ENCODE measurements at regions of chr21 and their contacts with region 1.

Region 1: GRCh38 chr21:32940079-32941014 is 85.4 kb upstream of the OLIG2 start:
- DNase-seq: peak; percentile 39 to 46
- H3K4me3 ChIP-seq: no peak overlapping the region
- H3K4me3 Mint-ChIP-seq: no peak overlapping the region
- H3K27ac Mint-ChIP-seq: no peak overlapping the region
- H3K4me1 ChIP-seq: no peaks in the 10 kb centered on the region
- H3K4me1 Mint-ChIP-seq: no peaks in the 10 kb centered on the region
- H3K27me3 ChIP-seq: no peaks in the 10 kb centered on the region
- H3K27me3 Mint-ChIP-seq: peaks cover 6% of the 10 kb centered on the region
- CTCF ChIP-seq: peak; percentile 63 to 66

Region 2: DNA sequence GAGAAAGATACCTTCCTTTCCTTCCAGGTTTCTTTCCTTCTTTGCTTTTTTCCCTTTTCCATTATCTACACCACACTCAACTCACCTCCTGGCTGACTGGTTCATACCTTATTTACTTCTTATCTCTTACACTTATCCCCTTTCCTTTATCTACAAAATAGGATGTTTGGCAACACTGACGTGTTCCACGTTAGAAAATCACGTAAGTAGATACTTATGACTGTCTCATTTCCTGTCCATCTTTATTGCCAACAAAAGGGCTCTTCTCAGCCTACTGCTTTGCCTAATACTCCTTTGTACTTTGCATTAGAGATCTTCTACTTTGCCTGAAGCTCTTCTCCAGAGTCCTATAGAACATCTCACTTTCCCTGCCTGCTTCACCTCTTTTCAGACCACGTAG is 237.6 kb before region 1 on chr21:
- CTCF ChIA-PET with region 1: no interaction called
- POLR2A ChIA-PET with region 1: no interaction called
- intact Hi-C with region 1: no loop called
- DNase-seq: peak in 1 of 2 experiments; percentile 5
- H3K4me3 ChIP-seq: no peak overlapping the region
- H3K4me3 Mint-ChIP-seq: no peak overlapping the region
- H3K27ac Mint-ChIP-seq: no peak overlapping the region
- H3K4me1 ChIP-seq: peaks cover 17% of the 10 kb centered on the region
- H3K4me1 Mint-ChIP-seq: peaks cover 22% of the 10 kb centered on the region
- H3K27me3 ChIP-seq: no peaks in the 10 kb centered on the region
- H3K27me3 Mint-ChIP-seq: no peaks in the 10 kb centered on the region
- CTCF ChIP-seq: no peak

Region 3: GRCh38 chr21:32929633-32930038 is 10.7 kb before region 1 on chr21:
- CTCF ChIA-PET with region 1: no interaction called
- POLR2A ChIA-PET with region 1: no interaction called
- intact Hi-C with region 1: no loop called
- DNase-seq: no peak
- H3K4me3 ChIP-seq: no peak overlapping the region
- H3K4me3 Mint-ChIP-seq: no peak overlapping the region
- H3K27ac Mint-ChIP-seq: no peak overlapping the region
- H3K4me1 ChIP-seq: no peaks in the 10 kb centered on the region
- H3K4me1 Mint-ChIP-seq: no peaks in the 10 kb centered on the region
- H3K27me3 ChIP-seq: no peaks in the 10 kb centered on the region
- H3K27me3 Mint-ChIP-seq: peaks cover 7% of the 10 kb centered on the region
- CTCF ChIP-seq: no peak

Region 4: GRCh38 chr21:33019885-33020557 is 79.7 kb after region 1 on chr21:
- CTCF ChIA-PET with region 1: interaction called, 13 read pairs
- POLR2A ChIA-PET with region 1: no interaction called
- intact Hi-C with region 1: no loop called
- DNase-seq: peak in 1 of 2 experiments; percentile 11
- H3K4me3 ChIP-seq: 0 out of 2 replicates have a peak overlapping the region, but pooled peaks have one; percentile 9
- H3K4me3 Mint-ChIP-seq: peak overlapping the region; percentile 1
- H3K27ac Mint-ChIP-seq: no peak overlapping the region
- H3K4me1 ChIP-seq: no peaks in the 10 kb centered on the region
- H3K4me1 Mint-ChIP-seq: no peaks in the 10 kb centered on the region
- H3K27me3 ChIP-seq: no peaks in the 10 kb centered on the region; the same call in 1 of the 2 replicates
- H3K27me3 Mint-ChIP-seq: peaks cover 23% of the 10 kb centered on the region
- CTCF ChIP-seq: no peak

Region 5: DNA sequence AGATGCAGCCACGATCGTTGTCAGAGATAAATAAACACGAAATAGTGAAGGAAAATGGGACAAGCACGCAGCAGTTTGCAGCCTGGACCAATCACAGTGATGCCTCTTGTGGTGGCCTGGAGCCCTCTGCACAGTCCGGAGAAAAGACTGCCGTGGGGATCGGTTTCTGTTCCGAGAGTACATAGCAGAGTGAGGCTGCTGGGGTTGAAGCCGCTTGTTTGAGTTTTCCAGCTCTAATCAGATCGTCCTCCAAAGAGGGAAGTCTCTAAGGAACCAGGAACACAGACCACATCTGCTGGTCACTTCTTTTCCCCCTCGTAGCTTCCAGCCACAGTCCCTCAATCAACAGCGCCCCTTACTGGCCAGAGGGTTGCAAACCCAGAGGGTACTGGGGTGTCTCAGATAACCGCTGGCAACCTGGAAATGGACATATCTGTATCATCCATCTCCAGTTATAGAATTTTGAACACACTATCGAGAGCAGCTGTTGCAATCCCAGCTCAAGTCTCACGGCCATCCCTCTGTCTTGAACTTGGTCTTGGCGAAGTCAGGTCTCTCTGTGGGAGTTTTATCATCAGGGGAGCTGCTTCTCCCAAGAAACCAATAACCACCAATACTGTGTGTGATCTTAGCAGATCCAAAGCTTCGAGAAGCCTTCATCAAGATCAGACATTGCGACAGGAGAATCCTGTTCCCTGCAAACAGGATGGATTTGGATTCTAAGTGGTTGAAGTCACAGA is 187.0 kb after region 1 on chr21:
- CTCF ChIA-PET with region 1: interaction called, 12 read pairs
- POLR2A ChIA-PET with region 1: no interaction called
- intact Hi-C with region 1: loop called (anchors 5 kb)
- DNase-seq: peak; percentile 56 to 69
- H3K4me3 ChIP-seq: no peak overlapping the region
- H3K4me3 Mint-ChIP-seq: no peak overlapping the region
- H3K27ac Mint-ChIP-seq: no peak overlapping the region
- H3K4me1 ChIP-seq: peaks cover 10% of the 10 kb centered on the region; the same call in 1 of the 2 replicates
- H3K4me1 Mint-ChIP-seq: peaks cover 10% of the 10 kb centered on the region
- H3K27me3 ChIP-seq: no peaks in the 10 kb centered on the region; the same call in 1 of the 2 replicates
- H3K27me3 Mint-ChIP-seq: peaks cover 16% of the 10 kb centered on the region
- CTCF ChIP-seq: peak; percentile 52 to 77

Region 6: GRCh38 chr21:34243562-34243961 is 1303.2 kb after region 1 on chr21:
- CTCF ChIA-PET with region 1: no interaction called
- POLR2A ChIA-PET with region 1: no interaction called
- intact Hi-C with region 1: no loop called
- DNase-seq: peak in 1 of 2 experiments; percentile 15
- H3K4me3 ChIP-seq: no peak overlapping the region
- H3K4me3 Mint-ChIP-seq: no peak overlapping the region
- H3K27ac Mint-ChIP-seq: no peak overlapping the region
- H3K4me1 ChIP-seq: no peaks in the 10 kb centered on the region
- H3K4me1 Mint-ChIP-seq: no peaks in the 10 kb centered on the region
- H3K27me3 ChIP-seq: no peaks in the 10 kb centered on the region
- H3K27me3 Mint-ChIP-seq: no peaks in the 10 kb centered on the region
- CTCF ChIP-seq: peak; percentile 33 to 44

Measured in Caco-2 (cell line).